Left cardiac atrium (tissue), 4 donors: ENCODE measurements at regions of chr12 and their contacts with region 1.

Region 1: DNA sequence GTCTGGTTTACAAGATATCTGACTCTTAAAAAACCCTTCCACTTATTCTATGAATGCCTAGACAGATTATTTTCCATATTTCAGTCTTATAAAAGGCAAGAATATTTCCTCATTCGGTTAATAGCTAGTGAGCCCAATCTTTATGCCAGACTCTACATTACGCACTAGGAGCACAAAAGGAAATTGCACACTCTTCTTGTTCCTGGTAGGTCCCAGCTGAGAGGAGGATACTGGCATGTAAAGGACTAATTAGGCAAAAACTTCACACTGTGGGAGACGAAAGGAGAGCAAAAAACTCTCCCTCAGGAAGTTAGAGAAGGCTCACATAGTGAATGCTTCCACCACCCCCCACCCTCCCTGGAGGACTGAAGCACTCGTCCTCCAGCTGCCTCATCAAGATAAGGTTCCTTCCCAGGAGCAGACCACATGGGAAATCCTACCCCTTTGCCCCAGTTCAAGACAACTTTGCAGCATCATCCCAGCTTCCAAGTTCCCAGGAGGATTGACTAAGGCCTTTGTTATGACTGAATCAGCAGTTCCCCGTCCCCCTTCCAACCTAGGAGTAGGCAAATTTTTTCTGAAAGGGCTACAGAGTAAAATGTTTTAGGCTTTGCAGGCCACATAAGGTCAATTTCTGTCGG is 14.5 kb downstream of the CAPZA3 start:
- DNase-seq: peak; percentile 33
- ATAC-seq: peak; percentile 52 to 59

Region 2: DNA sequence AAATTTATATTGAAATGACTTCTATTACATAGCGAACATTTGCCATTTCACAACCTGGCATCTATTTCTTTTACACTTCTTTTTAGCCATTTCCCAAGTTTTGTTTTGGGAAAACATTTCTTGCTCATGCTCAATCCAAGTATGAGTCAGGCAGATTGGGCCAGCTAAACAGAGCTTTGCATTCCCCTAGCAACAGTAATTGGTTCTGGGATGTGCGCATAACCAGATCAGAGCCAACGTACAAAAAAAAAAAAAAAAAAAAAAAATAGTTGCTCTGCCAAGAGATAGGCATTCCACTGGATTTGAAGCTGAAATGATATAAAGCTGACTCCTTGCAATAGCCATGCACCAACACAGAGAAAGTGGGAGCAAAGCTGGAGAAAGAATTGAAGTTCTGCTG is 52.1 kb before region 1 on chr12:
- intact Hi-C with region 1: loop called in 1 of 2 experiments (anchors 5 kb)
- DNase-seq: peak; percentile 28
- ATAC-seq: peak; percentile 97 to 98

Region 3: GRCh38 chr12:18872770-18873169 is 120.4 kb after region 1 on chr12:
- intact Hi-C with region 1: no loop called
- DNase-seq: no peak
- ATAC-seq: no peak

Region 4: DNA sequence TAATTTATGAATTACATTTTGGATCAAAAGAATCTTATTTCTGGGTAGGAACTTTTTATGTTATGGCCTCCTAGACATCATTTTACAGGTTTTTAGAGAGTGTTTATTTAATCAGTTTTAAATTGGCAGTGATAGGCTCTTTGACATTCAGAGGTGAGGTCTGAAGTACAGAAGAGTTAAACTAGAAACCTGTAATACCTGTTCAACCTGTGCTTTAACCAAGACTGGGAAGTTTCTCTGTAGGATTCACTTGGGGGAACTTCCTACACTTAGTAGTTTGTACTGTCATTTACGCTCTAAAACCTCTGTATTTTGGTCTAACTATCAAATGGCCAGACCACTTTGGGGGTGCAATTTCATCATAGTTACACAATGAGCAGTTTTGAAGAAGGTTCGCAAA is 413.1 kb after region 1 on chr12:
- intact Hi-C with region 1: loop called in 1 of 2 experiments (anchors 10 kb)
- DNase-seq: no peak
- ATAC-seq: no peak